Activated naive CD4-positive, alpha-beta T cell treated with anti-CD3 and anti-CD28 coated beads for 36 hours (primary cell): ENCODE measurements at regions of chr2 and their contacts with region 1.

Region 1: DNA sequence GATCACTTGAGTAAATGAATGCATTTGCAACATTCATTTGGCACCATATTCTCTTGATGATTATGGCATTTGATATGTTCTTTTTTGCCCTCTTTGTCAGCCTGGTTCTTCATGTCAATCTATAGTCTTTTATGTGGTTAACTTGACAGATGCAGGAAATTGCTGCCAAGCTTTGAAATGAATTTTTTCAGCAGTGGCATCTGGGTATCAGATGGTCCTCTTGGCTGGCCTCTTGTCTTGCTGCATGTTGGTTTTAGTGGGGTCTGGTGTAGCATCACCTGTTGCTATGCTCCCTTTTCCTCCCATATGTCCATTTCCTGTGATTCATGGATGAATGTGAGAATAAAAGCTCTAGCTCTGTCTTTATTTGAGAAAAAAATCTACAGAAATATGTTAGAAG is 119.9 kb downstream of the DPP4 start:
- DNase-seq: peak; percentile 18
- H3K4me3 Mint-ChIP-seq: no peak overlapping the region
- H3K27ac Mint-ChIP-seq: peak overlapping the region; percentile 88
- H3K4me1 Mint-ChIP-seq: peaks cover 53% of the 10 kb centered on the region
- H3K27me3 Mint-ChIP-seq: no peaks in the 10 kb centered on the region

Region 2: DNA sequence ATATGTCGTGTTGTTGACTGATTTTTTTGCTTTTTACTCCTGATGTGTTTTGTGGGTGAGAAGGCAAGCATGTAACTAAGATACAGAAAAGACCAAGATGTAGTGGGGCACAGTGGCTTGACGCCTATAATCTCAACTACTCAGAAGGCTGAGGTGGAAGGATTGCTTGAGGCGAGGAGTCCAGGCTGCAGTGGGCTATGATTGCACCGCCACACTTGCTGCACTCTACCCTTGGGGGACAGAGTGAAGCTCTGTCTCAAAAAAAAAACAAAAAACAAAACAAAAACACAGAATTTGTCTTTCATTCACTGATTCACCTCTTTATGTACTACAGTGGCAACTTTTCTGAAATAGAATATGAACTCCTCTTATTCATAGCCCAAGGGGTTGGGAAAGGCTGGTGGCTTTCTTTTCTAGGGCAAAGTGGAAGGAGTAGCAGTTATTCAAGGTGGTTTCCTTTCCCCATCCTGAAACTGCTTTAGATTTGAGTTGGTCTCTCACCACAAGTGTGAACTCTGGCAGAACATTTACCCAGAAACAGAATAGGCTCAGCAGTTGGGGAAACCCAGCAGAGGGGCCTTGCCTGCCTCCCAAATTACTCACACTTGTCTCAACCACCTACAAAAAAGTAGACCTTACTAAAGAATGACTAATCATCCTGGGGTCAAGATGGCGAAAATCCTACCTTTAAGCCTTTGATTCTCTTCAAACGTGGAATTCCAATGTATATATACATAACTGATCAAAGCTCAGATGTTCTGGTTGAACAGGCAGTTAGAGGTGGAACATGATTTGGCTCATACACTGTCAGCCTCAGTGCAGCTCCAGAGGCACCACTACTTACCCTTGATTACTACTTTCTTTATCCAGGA is 787.3 kb before region 1 on chr2:
- CTCF ChIA-PET with region 1: no interaction called
- intact Hi-C with region 1: loop called (anchors 2 kb)
- DNase-seq: peak; percentile 88
- H3K4me3 Mint-ChIP-seq: no peak overlapping the region
- H3K27ac Mint-ChIP-seq: peak overlapping the region; percentile 74
- H3K4me1 Mint-ChIP-seq: peaks cover 88% of the 10 kb centered on the region
- H3K27me3 Mint-ChIP-seq: no peaks in the 10 kb centered on the region

Region 3: GRCh38 chr2:161739773-161740172 is 214.3 kb before region 1 on chr2:
- CTCF ChIA-PET with region 1: no interaction called
- intact Hi-C with region 1: no loop called
- DNase-seq: no peak
- H3K4me3 Mint-ChIP-seq: no peak overlapping the region
- H3K27ac Mint-ChIP-seq: no peak overlapping the region
- H3K4me1 Mint-ChIP-seq: no peaks in the 10 kb centered on the region
- H3K27me3 Mint-ChIP-seq: no peaks in the 10 kb centered on the region

Region 4: GRCh38 chr2:161857920-161858319 is 96.2 kb before region 1 on chr2:
- CTCF ChIA-PET with region 1: no interaction called
- intact Hi-C with region 1: loop called (anchors 5 kb)
- DNase-seq: peak; percentile 14
- H3K4me3 Mint-ChIP-seq: no peak overlapping the region
- H3K27ac Mint-ChIP-seq: no peak overlapping the region
- H3K4me1 Mint-ChIP-seq: peaks cover 4% of the 10 kb centered on the region
- H3K27me3 Mint-ChIP-seq: no peaks in the 10 kb centered on the region

Region 5: GRCh38 chr2:161938339-161938738 is 15.8 kb before region 1 on chr2:
- CTCF ChIA-PET with region 1: no interaction called
- intact Hi-C with region 1: no loop called
- DNase-seq: no peak
- H3K4me3 Mint-ChIP-seq: no peak overlapping the region
- H3K27ac Mint-ChIP-seq: no peak overlapping the region
- H3K4me1 Mint-ChIP-seq: no peaks in the 10 kb centered on the region
- H3K27me3 Mint-ChIP-seq: no peaks in the 10 kb centered on the region

Region 6: GRCh38 chr2:161975062-161975812 is 21.1 kb after region 1 on chr2:
- CTCF ChIA-PET with region 1: interaction called, 3 read pairs
- intact Hi-C with region 1: loop called (anchors 1 kb)
- DNase-seq: no peak
- H3K4me3 Mint-ChIP-seq: no peak overlapping the region
- H3K27ac Mint-ChIP-seq: peak overlapping the region; percentile 75
- H3K4me1 Mint-ChIP-seq: peaks cover 43% of the 10 kb centered on the region
- H3K27me3 Mint-ChIP-seq: no peaks in the 10 kb centered on the region

Region 7: DNA sequence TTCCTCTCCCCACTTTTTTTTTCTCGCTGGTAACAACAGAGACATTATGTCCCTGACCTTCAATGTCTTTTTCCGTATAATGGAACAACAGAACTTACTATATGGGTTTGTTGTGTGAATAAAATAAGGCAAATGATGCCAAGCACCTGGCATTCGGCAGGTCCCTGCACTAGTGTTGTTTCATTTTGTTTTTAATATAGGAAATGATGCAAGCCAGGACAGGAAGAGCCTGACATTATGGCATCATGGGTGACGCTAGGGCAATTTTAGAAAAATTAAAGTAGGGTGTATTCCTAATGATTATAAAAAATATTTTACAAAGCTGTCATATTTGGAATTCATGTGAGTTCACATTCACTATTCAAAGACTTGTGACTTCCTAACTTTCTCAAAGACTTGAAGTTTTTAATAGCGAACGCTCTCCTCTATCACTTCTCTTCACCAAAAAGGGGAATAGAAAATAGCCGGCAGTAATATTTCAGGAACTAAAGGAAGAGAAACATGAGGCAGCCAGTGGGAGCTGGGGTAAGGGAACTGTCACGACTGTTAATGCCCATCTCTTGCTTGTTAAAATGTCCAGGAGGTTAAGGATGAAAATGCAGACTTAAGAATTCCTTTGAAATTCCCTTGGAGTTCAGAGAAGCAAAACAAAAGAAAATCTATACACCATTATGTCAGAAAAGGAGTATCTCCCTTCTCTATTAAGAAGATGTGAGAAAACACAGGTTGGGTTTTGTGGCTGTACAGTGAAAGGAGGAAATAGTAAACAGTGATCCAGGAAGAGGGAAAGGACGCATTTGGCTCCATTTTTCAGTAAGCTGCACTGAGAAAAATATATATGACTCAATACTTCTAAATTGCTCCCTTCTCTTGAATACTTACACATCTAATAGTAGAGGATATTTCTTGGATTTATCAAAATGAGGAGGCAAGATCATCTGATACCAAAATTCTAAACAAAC is 59.7 kb after region 1 on chr2:
- CTCF ChIA-PET with region 1: interaction called, 6 read pairs
- intact Hi-C with region 1: loop called (anchors 1 kb)
- DNase-seq: peak; percentile 31
- H3K4me3 Mint-ChIP-seq: peak overlapping the region; percentile 70
- H3K27ac Mint-ChIP-seq: peak overlapping the region; percentile 95
- H3K4me1 Mint-ChIP-seq: peaks cover 63% of the 10 kb centered on the region
- H3K27me3 Mint-ChIP-seq: no peaks in the 10 kb centered on the region

Region 8: GRCh38 chr2:162073888-162074645 is 120.0 kb after region 1 on chr2 and contains the start of gene DPP4:
- CTCF ChIA-PET with region 1: no interaction called
- intact Hi-C with region 1: loop called (anchors 1 kb)
- DNase-seq: peak; percentile 60
- H3K4me3 Mint-ChIP-seq: peak within 1 kb of the TSS; percentile 94
- H3K27ac Mint-ChIP-seq: peak within 1 kb of the TSS; percentile 79
- H3K4me1 Mint-ChIP-seq: peaks cover 48% of the 10 kb centered on the region
- H3K27me3 Mint-ChIP-seq: no peaks in the 10 kb centered on the region
- total RNA-seq, gene DPP4: 11.9 to 12.9 TPM